ENCODE measurements at regions of chr22 and their contacts with region 1.

Region 1: DNA sequence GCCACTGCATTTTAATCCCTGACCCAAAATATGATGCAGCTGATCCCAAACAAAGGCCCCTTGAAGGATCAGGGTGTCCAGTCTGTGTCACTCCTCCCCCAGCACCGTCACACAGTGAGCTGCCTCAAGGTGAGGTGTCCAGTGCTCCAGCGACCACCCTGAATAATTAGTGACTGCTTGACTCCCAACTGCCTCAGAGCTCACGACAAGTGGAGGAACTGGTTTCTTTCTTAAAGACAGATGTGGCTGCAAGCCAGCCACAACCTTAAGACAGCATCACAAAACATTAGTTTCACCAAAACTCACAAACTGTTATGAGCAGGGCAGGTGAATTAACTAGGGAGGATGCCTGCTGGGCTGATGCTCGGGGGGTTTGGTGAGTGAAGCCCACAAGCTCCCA is 74.6 kb downstream of the PIWIL3 start:
- DNase-seq: no peak
- H3K4me3 ChIP-seq: no peak overlapping the region
- H3K27ac ChIP-seq: no peak overlapping the region
- H3K4me1 ChIP-seq: no peaks in the 10 kb centered on the region
- H3K27me3 ChIP-seq: no peaks in the 10 kb centered on the region; the same call in 1 of the 2 replicates
- CTCF ChIP-seq: no peak

Region 2: DNA sequence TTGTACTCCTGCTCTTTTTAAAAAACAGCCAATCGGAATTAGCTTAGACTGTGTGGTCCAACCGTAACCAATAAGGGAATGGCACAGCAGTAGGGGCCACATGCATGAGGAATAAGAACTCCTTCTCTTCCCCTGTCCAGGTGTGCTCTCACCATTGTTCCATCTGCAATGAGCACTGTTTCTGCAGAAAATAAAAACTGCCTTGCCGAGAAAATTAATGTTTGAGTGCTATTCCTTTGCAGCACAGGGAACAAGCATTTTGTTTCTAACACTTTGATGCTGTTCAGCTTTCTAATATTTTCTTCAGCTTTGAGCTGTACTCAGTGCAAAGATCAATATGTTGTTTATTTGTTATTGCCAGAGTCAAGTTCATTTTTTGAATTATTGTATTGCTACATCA is 16.7 kb after region 1 on chr22:
- CTCF ChIA-PET with region 1: interaction called, 15 read pairs
- POLR2A ChIA-PET with region 1: no interaction called
- intact Hi-C with region 1: no loop called
- DNase-seq: no peak
- H3K4me3 ChIP-seq: no peak overlapping the region
- H3K27ac ChIP-seq: no peak overlapping the region
- H3K4me1 ChIP-seq: no peaks in the 10 kb centered on the region
- H3K27me3 ChIP-seq: peaks cover 68% of the 10 kb centered on the region
- CTCF ChIP-seq: no peak

Measured in PC-9 (cell line).